Ascending aorta (tissue), 2 donors: ENCODE measurements at regions of chr20 and their contacts with region 1.

Region 1: DNA sequence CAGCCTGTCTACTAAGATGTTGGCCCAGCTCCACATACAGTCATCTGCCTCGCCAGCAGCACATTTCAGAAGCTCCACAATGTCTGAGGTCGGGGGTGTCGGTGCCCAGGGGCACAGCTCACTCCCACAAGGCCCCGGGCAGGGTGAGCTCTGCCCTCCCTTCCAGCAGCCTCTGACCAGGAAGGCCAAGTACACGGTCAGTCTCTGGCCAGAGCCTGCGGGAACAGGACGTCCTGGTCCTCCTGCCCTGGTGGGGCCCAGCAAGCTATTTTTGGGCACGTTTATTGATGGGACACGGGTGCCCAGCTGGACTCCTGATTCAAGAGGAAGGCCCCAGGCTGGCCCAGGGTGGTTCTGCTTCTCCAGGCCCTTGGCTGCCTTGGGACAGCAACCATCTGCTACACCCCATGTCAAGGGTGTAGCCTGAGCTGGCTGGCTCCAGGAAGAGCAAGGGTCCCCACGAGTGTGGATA is 114.9 kb upstream of the PTPN1 start:
- DNase-seq: peak; percentile 93 to 98
- H3K4me3 ChIP-seq: no peak overlapping the region
- H3K27ac ChIP-seq: peak overlapping the region; percentile 90 to 97
- H3K4me1 ChIP-seq: peaks cover 30 to 56% of the 10 kb centered on the region in 2 donors
- H3K27me3 ChIP-seq: no peaks in the 10 kb centered on the region
- CTCF ChIP-seq: no peak

Region 2: GRCh38 chr20:50274570-50275430 is 120.5 kb before region 1 on chr20:
- intact Hi-C with region 1: no loop called
- DNase-seq: peak; percentile 65 to 87
- H3K4me3 ChIP-seq: no peak overlapping the region
- H3K27ac ChIP-seq: peak overlapping the region; percentile 5 to 34
- H3K4me1 ChIP-seq: peaks cover 4 to 10% of the 10 kb centered on the region in 2 donors
- H3K27me3 ChIP-seq: no peaks in the 10 kb centered on the region
- CTCF ChIP-seq: no peak

Region 3: GRCh38 chr20:50415516-50416113 is 20.3 kb after region 1 on chr20:
- intact Hi-C with region 1: loop called (anchors 1 kb)
- DNase-seq: peak; percentile 94 to 100
- H3K4me3 ChIP-seq: peak overlapping the region in 1 of 2 donors; percentile 5
- H3K27ac ChIP-seq: peak overlapping the region; percentile 98 to 99
- H3K4me1 ChIP-seq: peaks cover 16 to 24% of the 10 kb centered on the region in 2 donors
- H3K27me3 ChIP-seq: no peaks in the 10 kb centered on the region
- CTCF ChIP-seq: no peak

Region 4: GRCh38 chr20:50467718-50468356 is 72.5 kb after region 1 on chr20:
- intact Hi-C with region 1: no loop called
- DNase-seq: no peak
- H3K4me3 ChIP-seq: no peak overlapping the region
- H3K27ac ChIP-seq: no peak overlapping the region
- H3K4me1 ChIP-seq: peaks cover 0 to 6% of the 10 kb centered on the region in 2 donors
- H3K27me3 ChIP-seq: no peaks in the 10 kb centered on the region
- CTCF ChIP-seq: no peak